Posterior vena cava (tissue), 2 donors: ENCODE measurements at regions of chr3 and their contacts with region 1.

Region 1: GRCh38 chr3:196813903-196814302 is 53.8 kb upstream of the SENP5 start:
- DNase-seq: no peak

Region 2: DNA sequence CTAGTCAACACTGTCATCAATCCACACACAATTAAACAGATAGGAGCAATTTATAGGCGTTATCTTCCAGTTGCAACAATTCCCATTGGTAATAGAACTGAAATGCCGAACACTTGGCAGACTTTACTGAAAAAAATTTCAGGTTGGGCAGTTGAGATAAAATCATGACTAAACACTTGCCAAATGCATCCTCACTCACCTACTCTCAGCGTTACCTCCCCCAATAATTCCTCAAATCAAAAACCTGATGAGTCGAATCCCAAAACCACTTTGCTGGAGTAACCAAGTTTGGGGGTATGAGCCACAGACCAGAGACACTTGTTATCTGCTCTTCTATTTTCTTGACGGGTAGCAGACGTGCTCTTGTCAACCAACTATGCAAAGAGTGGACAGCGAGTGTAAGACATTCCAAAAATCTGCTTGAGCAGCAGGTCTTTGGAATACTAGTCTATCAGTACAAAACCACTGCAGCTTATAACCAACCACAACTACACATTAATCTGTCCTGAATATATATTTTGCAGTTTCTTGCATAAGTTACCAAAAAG is 1301.0 kb before region 1 on chr3:
- intact Hi-C with region 1: no loop called
- DNase-seq: no peak

Region 3: DNA sequence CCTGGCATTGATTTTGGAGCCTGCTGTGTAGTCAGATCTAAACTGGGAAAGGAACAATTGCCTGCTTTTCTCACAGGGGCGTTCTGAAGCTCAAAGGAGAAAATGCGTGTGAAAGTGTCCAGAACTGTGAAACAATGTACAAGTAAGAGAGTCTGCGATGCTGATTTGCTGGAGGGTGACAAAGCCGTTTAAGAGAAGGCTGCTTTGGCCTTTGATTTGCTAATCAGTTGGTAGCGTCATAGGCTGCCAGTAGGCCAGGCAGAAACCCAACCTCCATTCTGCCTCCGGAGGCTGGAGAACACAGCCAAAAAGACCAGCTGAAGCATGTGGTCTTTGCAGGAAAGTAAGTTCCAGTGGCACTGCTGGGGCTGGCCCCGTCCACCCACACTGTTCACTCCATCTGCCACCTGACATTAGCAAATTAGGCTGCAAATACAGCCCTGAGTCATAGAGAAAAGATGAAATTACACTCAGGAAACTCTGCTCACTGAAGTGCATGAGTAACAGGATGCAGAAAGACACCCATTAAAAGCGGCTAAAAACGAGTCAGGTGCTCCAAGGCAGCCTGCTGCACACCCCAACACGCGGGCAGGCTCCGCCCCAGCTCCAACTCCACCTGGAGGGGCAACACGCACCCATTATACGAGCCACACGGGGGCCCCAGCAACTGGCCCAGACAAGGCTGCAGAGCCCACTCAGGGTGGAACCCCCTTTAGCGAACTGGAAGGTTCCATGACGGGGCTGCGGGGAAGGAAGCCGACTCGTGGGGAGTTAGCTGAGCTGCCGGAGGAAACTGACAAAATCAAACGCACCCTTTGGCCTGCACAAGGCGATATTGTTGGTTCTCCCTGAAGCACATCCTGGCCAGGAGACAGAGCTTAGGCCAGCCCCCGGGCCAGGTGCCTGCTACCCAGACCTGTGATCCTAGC is 634.3 kb before region 1 on chr3:
- intact Hi-C with region 1: loop called in 1 of 2 experiments (anchors 10 kb)
- DNase-seq: no peak

Region 4: DNA sequence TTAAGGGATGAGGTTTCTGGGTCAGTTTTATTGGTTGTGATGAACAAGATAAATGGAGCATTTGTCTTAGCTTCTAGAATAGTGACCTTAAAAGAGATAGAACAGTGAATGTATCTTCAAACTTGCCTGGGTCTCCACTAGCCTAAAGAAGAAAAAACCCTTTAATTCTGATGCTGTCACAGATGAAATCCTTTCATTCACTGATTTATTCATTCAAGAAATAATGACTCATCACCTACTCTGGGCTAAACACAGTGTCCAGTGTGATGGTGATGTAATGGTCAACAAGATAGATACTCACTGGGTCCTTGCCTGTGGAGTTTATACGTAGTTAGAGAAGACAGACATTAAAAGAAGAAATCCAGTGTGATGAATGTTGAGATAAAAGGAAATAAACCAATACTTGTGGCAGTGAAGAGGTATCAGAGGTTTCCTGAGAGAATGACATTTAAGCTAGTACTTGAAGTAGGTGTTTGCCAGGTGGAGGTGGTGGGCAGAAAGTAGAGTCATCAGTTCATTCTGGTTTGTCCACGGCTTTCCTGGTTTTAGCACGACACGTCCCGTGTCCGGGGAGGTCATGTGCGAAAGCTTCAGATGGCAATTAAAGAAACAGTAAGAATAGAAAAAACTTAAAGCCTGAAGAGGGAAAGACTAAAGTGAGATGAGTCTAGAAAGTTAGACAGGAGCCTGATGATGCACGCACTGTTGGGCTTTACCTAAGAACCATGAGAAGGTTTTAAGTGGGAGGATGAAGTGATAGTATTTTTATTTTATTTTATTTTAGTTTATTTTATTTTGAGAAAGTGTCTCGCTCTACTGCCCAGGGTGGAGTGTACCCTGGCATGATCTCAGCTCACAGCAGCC is 55.8 kb before region 1 on chr3:
- intact Hi-C with region 1: loop called in 1 of 2 experiments (anchors 10 kb)
- DNase-seq: no peak

Region 5: DNA sequence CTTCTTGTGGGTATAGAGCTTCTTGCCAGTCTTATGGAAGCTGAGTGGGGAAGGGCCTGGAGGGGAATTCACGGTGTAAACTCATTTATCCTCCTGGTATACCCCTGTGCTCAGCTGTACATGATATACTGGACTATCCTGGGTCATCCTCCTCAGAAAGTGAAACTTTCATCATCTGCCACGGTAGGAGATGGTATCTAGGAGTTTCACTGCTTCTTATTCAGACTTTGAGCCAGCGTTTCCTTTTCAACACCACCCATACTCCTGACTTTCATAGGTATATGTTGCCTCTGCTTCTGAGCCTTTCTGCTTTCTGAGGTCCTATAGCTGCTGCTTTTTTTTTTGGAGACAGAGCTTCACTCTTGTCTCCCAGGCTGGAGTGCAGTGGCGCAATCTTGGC is 69.5 kb after region 1 on chr3:
- intact Hi-C with region 1: loop called in 1 of 2 experiments (anchors 2 kb)
- DNase-seq: no peak